ENCODE measurements at regions of chr5 and their contacts with region 1.

Region 1: GRCh38 chr5:133298447-133298846 is 246.6 kb downstream of the HSPA4 start:
- DNase-seq: no peak
- ATAC-seq: no peak
- H3K4me3 ChIP-seq: no peak overlapping the region
- H3K27ac ChIP-seq: no peak overlapping the region
- H3K4me1 ChIP-seq: no peaks in the 10 kb centered on the region
- H3K27me3 ChIP-seq: no peaks in the 10 kb centered on the region

Region 2: DNA sequence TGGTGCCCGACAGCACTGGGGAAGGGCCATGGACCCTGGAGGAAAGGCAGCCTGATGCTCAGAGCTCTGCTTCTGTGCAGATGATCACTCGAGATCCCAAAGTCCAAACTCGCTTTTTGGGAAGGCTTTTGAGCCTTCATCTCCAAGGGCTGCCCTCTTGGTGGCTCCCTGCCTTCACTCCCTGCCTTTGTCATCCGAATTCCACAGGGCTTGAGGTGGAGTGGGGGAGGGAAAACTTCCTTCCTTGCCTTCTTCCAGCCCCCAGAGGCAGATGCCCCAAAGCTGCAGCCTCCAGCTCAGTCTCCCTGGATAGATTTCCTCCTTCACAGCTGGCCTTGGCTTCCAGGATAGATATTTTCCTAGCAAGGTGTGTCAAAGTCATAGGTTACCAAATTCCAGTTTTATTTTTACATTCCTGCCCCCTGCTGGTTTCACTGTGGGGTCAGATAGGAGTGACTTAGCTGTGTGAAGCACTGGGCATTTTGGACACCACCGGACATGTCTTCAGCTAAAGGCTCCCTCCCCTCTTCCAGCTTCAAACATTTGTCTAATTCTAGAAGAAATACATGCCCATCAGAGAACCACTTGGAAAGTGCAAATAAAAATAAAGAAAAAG is 21.6 kb after region 1 on chr5:
- intact Hi-C with region 1: loop called in 1 of 4 experiments (anchors 1 kb)
- DNase-seq: no peak
- ATAC-seq: no peak
- H3K4me3 ChIP-seq: no peak overlapping the region
- H3K27ac ChIP-seq: no peak overlapping the region
- H3K4me1 ChIP-seq: no peaks in the 10 kb centered on the region
- H3K27me3 ChIP-seq: no peaks in the 10 kb centered on the region

Region 3: DNA sequence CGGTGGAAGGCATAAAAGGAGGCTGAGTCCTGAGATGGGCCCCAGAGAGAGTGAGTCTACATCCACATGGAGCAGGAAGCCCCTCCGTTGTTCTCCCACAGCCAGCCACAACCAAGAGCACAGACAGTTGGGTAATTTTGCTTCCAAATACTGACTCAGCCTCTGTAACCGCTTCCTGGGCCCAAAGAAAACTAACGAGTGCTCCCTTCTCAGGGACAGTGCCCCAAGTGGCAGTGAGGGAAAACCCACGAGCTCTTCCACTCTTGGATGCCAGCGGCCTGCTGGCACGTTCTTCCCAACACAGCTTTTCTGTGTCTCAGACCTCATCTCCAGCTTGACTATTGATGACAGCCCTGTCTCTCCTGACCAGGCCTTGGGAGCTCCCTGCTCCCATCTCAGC is 106.3 kb after region 1 on chr5:
- intact Hi-C with region 1: no loop called
- DNase-seq: no peak
- ATAC-seq: no peak
- H3K4me3 ChIP-seq: no peak overlapping the region
- H3K27ac ChIP-seq: no peak overlapping the region
- H3K4me1 ChIP-seq: no peaks in the 10 kb centered on the region
- H3K27me3 ChIP-seq: no peaks in the 10 kb centered on the region

Region 4: DNA sequence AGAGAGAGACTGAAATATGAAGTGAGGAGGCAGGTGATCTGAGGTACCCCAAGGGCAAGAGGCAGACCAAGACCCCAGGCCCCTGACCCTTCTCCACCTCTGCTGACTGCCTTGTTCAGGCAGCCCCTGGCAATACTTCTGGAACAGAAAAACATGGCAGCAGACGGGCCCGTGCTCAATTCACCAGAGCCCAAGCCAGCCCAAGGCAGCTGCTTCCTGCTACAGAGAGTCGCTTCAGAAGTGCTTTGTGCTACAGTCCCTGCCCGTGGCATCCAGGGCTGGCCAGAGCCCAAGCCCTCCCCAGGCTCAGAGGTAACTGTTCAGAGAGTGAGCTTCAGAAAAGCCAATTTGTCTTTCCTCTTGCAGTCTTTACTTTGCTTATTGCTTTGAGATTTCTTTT is 465.3 kb after region 1 on chr5:
- intact Hi-C with region 1: no loop called
- DNase-seq: no peak
- ATAC-seq: peak; percentile 40 to 50
- H3K4me3 ChIP-seq: no peak overlapping the region
- H3K27ac ChIP-seq: no peak overlapping the region
- H3K4me1 ChIP-seq: no peaks in the 10 kb centered on the region
- H3K27me3 ChIP-seq: no peaks in the 10 kb centered on the region